Activated naive CD4-positive, alpha-beta T cell treated with anti-CD3 and anti-CD28 coated beads, Interleukin-2, amount 10 ng/mL, durations not matched to agents 7 days and 5 days (primary cell): ENCODE measurements at regions of chr22 and their contacts with region 1.

Region 1: GRCh38 chr22:36180038-36180880 is 19.7 kb upstream of the APOL3 start:
- DNase-seq: peak; percentile 89
- H3K4me3 Mint-ChIP-seq: no peak overlapping the region
- H3K27ac Mint-ChIP-seq: no peak overlapping the region
- H3K4me1 Mint-ChIP-seq: no peaks in the 10 kb centered on the region
- H3K27me3 Mint-ChIP-seq: peaks cover 31% of the 10 kb centered on the region

Region 2: DNA sequence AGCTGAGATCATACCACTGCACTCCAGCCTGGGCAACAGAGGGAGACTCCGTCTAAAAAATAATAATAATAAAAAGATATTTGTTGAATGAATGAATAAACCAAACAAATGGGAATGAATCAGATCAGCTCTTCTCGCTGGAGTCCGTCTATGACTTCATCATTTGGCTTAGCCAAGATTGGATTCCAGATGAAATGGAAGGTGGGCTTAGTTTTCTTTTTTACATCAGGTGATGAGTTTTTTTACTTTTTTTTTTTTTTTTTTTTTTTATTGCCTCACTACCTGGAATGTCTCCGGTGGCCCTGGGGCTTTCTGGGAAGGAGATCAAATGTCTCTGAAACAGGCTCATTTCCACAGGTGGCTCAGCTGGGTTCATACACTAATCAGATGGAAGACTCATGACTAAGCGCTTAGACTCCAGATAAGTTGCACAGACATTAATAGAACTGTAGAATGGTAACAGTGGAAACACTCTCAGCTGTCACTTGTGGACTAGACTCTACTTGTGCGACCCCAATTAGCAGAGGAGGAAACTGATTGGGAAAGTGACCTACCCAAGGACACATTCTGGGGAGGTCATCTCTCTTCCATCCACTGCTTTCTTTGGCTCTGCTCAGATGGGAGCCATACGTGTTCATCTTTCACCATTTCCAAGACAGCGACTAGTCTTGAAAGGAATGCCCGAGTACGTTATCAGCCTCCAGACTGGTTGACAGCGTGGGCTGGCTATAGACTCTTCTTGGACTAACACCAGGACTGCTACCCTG is 131.2 kb before region 1 on chr22:
- CTCF ChIA-PET with region 1: no interaction called
- DNase-seq: no peak
- H3K4me3 Mint-ChIP-seq: no peak overlapping the region
- H3K27ac Mint-ChIP-seq: no peak overlapping the region
- H3K4me1 Mint-ChIP-seq: peaks cover 5% of the 10 kb centered on the region
- H3K27me3 Mint-ChIP-seq: peaks cover 14% of the 10 kb centered on the region

Region 3: DNA sequence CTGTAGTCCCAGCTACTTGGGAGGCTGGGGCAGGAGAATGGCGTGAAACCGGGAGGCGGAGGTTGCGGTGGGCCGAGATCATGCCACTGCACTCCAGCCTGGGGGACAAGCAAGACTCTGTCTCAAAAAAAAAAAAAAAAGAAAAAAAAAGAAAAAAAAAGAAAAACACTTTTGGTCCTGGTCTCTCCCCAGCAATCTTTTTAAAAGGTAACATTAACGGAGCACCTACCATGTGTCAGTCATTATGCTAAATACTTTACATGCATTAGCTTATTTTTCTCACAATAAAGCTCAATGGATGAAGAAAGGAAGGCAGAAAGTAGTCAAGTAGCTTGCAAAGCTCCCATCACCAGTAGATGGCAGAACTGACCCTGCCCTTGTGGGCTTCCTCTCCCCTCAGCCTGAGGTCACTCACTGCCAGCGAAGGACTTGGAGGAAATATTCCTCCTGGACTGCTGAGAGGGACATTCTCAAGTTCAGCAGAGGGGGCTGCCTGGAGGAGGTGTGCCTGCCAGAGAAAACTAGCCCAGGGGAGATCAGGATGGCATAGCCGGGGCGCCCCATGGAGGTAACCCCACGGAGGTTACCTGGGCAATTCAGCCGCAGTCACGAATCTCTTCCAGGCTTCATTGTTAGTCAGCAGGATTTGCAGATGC is 35.2 kb before region 1 on chr22:
- CTCF ChIA-PET with region 1: interaction called, 48 read pairs
- DNase-seq: peak; percentile 53
- H3K4me3 Mint-ChIP-seq: no peak overlapping the region
- H3K27ac Mint-ChIP-seq: peak overlapping the region; percentile 39
- H3K4me1 Mint-ChIP-seq: no peaks in the 10 kb centered on the region
- H3K27me3 Mint-ChIP-seq: no peaks in the 10 kb centered on the region

Region 4: GRCh38 chr22:36153501-36154422 is 26.5 kb before region 1 on chr22:
- CTCF ChIA-PET with region 1: interaction called, 12 read pairs
- DNase-seq: no peak
- H3K4me3 Mint-ChIP-seq: no peak overlapping the region
- H3K27ac Mint-ChIP-seq: no peak overlapping the region
- H3K4me1 Mint-ChIP-seq: peaks cover 72% of the 10 kb centered on the region
- H3K27me3 Mint-ChIP-seq: no peaks in the 10 kb centered on the region

Region 5: DNA sequence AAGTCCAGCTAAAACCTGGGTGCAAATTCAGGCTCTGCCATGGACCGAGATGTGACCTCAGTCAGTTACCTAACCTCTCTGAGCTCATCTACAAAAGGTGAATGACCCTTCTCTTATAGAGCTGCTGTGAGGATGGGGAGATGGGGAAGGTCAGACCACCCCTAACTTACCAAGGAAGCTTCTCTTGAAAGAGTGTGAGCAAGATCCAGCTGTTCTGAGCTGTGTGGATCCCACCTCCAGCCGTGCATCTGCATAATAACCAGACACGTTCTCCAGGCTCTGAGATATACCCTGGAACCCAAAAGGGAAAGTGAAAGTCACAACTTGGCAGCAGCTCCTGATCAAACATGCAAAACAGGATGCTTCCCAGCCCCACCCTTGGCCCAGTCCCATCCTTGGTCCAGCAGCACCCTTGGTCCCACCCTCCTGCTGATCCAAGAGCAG is 19.7 kb before region 1 on chr22 and contains the start of gene APOL3:
- CTCF ChIA-PET with region 1: interaction called, 33 read pairs
- DNase-seq: peak; percentile 77
- H3K4me3 Mint-ChIP-seq: peak within 1 kb of the TSS; percentile 99
- H3K27ac Mint-ChIP-seq: peak within 1 kb of the TSS; percentile 93
- H3K4me1 Mint-ChIP-seq: peaks cover 89% of the 10 kb centered on the region
- H3K27me3 Mint-ChIP-seq: peaks cover under 1% of the 10 kb centered on the region